SK-N-SH (cell line): ENCODE measurements at regions of chr1 and their contacts with region 1.

Region 1: DNA sequence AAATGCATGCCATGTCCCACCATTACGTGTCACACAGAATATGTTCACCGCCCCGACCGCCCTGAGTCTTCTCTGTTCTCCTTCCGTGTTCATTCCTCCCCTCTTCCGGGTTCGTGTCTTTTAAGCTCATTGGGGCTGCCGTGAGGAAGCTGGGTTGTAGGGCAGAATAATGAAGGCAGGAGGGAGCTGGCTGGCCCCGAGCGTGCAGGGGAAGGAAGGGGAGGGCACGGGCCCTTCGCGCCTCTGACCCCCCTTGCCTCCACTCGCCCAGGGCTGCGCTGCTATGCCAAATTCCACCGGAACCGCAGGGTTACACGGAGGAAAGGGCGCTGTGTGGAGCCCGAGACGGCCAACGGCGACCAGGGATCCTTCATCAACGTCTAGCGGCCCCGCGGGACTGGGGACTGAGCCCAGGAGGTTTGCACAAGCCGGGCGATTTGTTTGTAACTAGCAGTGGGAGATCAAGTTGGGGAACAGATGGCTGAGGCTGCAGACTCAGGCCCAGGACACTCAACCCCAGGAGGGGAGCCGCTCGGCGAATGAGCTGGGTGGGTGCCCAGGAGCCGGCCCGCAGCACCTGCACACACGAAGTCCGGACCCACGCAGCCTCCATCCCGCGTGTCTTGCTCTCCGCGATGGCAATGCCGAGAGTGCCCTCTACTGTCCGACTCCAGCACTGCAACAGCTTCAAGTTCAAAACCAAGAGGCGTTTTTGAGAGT is 16.5 kb upstream of the AGTRAP start:
- DNase-seq: peak; percentile 82
- H3K4me3 ChIP-seq: peak overlapping the region; percentile 21 to 36; a peak in 2 of 4 replicates
- H3K27ac ChIP-seq: no peak overlapping the region
- H3K4me1 ChIP-seq: peaks cover 0 to 4% of the 10 kb centered on the region in 2 experiments; a peak in 1 of 4 replicates
- H3K27me3 ChIP-seq: no peaks in the 10 kb centered on the region; the same call in 1 of the 2 replicates
- CTCF ChIP-seq: peak; percentile 98
- EP300 ChIP-seq: no peak
- RAD21 ChIP-seq: peak; percentile 93

Region 2: GRCh38 chr1:11671544-11672286 is 47.8 kb before region 1 on chr1:
- CTCF ChIA-PET with region 1: interaction called, 20 read pairs
- POLR2A ChIA-PET with region 1: no interaction called
- DNase-seq: no peak
- H3K4me3 ChIP-seq: no peak overlapping the region
- H3K27ac ChIP-seq: no peak overlapping the region
- H3K4me1 ChIP-seq: no peaks in the 10 kb centered on the region
- H3K27me3 ChIP-seq: no peaks in the 10 kb centered on the region
- CTCF ChIP-seq: no peak
- EP300 ChIP-seq: no peak
- RAD21 ChIP-seq: no peak

Region 3: DNA sequence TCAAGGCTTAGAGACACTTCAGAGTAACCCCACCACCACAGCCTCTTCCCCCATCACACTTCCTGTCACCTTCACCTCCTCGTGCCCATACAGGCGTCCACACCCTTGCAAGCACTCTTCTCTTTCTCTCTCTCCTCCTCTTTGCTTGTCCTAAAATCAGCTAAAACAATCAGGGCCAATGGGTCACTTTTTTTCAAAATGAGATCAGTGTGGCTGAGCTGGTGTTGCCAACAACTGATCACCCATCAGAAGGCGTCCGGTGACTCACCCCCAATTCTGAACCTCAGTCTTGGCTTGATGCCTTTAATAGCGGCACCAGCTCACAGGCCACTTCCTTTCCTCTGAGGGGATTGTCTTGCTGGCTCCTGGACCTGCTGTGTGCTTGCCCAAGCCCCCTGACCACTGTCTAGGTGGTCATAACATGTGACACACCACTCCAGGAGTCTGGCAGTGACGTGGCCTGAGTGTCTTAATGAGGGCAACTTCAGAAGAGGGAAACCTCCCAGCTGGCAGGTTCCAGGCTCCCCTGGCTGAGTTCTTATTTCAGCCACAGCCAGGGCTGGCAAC is 26.4 kb before region 1 on chr1:
- CTCF ChIA-PET with region 1: interaction called, 10 read pairs
- POLR2A ChIA-PET with region 1: no interaction called
- DNase-seq: no peak
- H3K4me3 ChIP-seq: no peak overlapping the region
- H3K27ac ChIP-seq: peak overlapping the region in 1 of 2 experiments; percentile 13; a peak in 1 of 4 replicates
- H3K4me1 ChIP-seq: peaks cover 6 to 15% of the 10 kb centered on the region in 2 experiments; a peak in 3 of 4 replicates
- H3K27me3 ChIP-seq: peaks cover 14% of the 10 kb centered on the region
- CTCF ChIP-seq: no peak
- EP300 ChIP-seq: no peak
- RAD21 ChIP-seq: no peak

Region 4: GRCh38 chr1:11707621-11708276 is 11.7 kb before region 1 on chr1:
- CTCF ChIA-PET with region 1: interaction called, 90 read pairs
- POLR2A ChIA-PET with region 1: no interaction called
- DNase-seq: peak; percentile 74
- H3K4me3 ChIP-seq: no peak overlapping the region
- H3K27ac ChIP-seq: no peak overlapping the region
- H3K4me1 ChIP-seq: peaks cover 0 to 8% of the 10 kb centered on the region in 2 experiments; a peak in 1 of 4 replicates
- H3K27me3 ChIP-seq: no peaks in the 10 kb centered on the region
- CTCF ChIP-seq: no peak
- EP300 ChIP-seq: no peak
- RAD21 ChIP-seq: no peak